Activated CD8-positive, alpha-beta T cell treated with anti-CD3 and anti-CD28 coated beads, Interleukin-2, amount 10 ng/mL, durations not matched to agents 7 days and 5 days (primary cell): ENCODE measurements at regions of chr2 and their contacts with region 1.

Region 1: GRCh38 chr2:29196792-29197788 is 81.9 kb downstream of the CLIP4 start:
- DNase-seq: peak; percentile 87
- ATAC-seq: peak; percentile 95
- H3K4me3 Mint-ChIP-seq: no peak overlapping the region
- H3K27ac Mint-ChIP-seq: no peak overlapping the region
- H3K4me1 Mint-ChIP-seq: no peaks in the 10 kb centered on the region
- H3K27me3 Mint-ChIP-seq: no peaks in the 10 kb centered on the region

Region 2: GRCh38 chr2:28958689-28959088 is 238.4 kb before region 1 on chr2:
- CTCF ChIA-PET with region 1: interaction called, 11 read pairs
- POLR2A ChIA-PET with region 1: interaction called, 5 read pairs
- DNase-seq: peak; percentile 64
- ATAC-seq: peak; percentile 60
- H3K4me3 Mint-ChIP-seq: no peak overlapping the region
- H3K27ac Mint-ChIP-seq: no peak overlapping the region
- H3K4me1 Mint-ChIP-seq: peaks cover 19% of the 10 kb centered on the region
- H3K27me3 Mint-ChIP-seq: peaks cover 3% of the 10 kb centered on the region

Region 3: GRCh38 chr2:29146197-29146596 is 50.9 kb before region 1 on chr2:
- CTCF ChIA-PET with region 1: no interaction called
- POLR2A ChIA-PET with region 1: no interaction called
- DNase-seq: no peak
- ATAC-seq: no peak
- H3K4me3 Mint-ChIP-seq: no peak overlapping the region
- H3K27ac Mint-ChIP-seq: no peak overlapping the region
- H3K4me1 Mint-ChIP-seq: peaks cover 1% of the 10 kb centered on the region
- H3K27me3 Mint-ChIP-seq: no peaks in the 10 kb centered on the region